K562 (cell line): ENCODE measurements at regions of chrX and their contacts with region 1.

Region 1: GRCh38 chrX:37745354-37745753 is 34.5 kb upstream of the CYBB start:
- DNase-seq: peak; percentile 54 to 72 (median 68)
- ATAC-seq: peak; percentile 95
- H3K4me3 ChIP-seq: no peak overlapping the region
- H3K27ac ChIP-seq: no peak overlapping the region
- H3K4me1 ChIP-seq: no peaks in the 10 kb centered on the region
- H3K27me3 ChIP-seq: no peaks in the 10 kb centered on the region
- CTCF ChIP-seq: peak; percentile 76 to 80 (median 80)
- EP300 ChIP-seq: no peak
- POLR2A ChIP-seq: no peak
- RAD21 ChIP-seq: peak; percentile 85 to 89

Region 2: DNA sequence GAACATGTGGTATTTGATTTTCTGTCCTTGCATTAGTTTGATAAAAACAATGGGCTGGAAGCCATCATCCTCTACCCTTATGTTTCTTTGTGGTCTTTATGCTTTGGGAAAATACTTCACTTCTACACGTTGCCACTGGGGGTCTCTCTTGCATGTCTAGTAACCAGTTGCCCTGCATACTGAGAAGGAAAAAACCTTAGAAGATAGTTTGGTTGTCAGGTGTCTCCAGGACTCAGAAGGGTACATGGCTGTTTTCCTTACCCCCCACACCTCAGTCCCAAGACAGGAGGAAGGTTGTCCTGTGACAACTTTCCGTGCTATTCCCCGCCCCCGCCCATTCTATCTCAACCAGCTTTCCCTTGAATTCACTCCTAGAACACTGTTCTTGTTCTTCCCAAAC is 236.0 kb before region 1 on chrX:
- CTCF ChIA-PET with region 1: no interaction called
- POLR2A ChIA-PET with region 1: no interaction called
- in situ Hi-C with region 1: no loop called
- intact Hi-C with region 1: loop called (anchors 10 kb)
- DNase-seq: peak in 1 of 4 experiments; percentile 8
- ATAC-seq: peak; percentile 77
- H3K4me3 ChIP-seq: no peak overlapping the region
- H3K27ac ChIP-seq: no peak overlapping the region
- H3K4me1 ChIP-seq: peaks cover 0 to 3% of the 10 kb centered on the region in 2 experiments; a peak in 1 of 5 replicates
- H3K27me3 ChIP-seq: no peaks in the 10 kb centered on the region
- CTCF ChIP-seq: peak; percentile 15 to 42 (median 40); a peak in 3 of 6 replicates
- EP300 ChIP-seq: no peak
- POLR2A ChIP-seq: no peak
- RAD21 ChIP-seq: peak; percentile 33 to 60

Region 3: GRCh38 chrX:37603938-37604409 is 141.4 kb before region 1 on chrX:
- CTCF ChIA-PET with region 1: no interaction called
- POLR2A ChIA-PET with region 1: no interaction called
- in situ Hi-C with region 1: no loop called
- intact Hi-C with region 1: no loop called
- DNase-seq: no peak
- ATAC-seq: no peak
- H3K4me3 ChIP-seq: no peak overlapping the region
- H3K27ac ChIP-seq: no peak overlapping the region
- H3K4me1 ChIP-seq: peaks cover 0 to 5% of the 10 kb centered on the region in 2 experiments; a peak in 1 of 5 replicates
- H3K27me3 ChIP-seq: no peaks in the 10 kb centered on the region
- CTCF ChIP-seq: no peak
- EP300 ChIP-seq: no peak
- POLR2A ChIP-seq: no peak
- RAD21 ChIP-seq: no peak

Region 4: GRCh38 chrX:37627602-37628001 is 117.8 kb before region 1 on chrX:
- CTCF ChIA-PET with region 1: no interaction called
- POLR2A ChIA-PET with region 1: no interaction called
- in situ Hi-C with region 1: no loop called
- intact Hi-C with region 1: no loop called
- DNase-seq: no peak
- ATAC-seq: no peak
- H3K4me3 ChIP-seq: no peak overlapping the region
- H3K27ac ChIP-seq: no peak overlapping the region
- H3K4me1 ChIP-seq: no peaks in the 10 kb centered on the region
- H3K27me3 ChIP-seq: no peaks in the 10 kb centered on the region
- CTCF ChIP-seq: no peak
- EP300 ChIP-seq: no peak
- POLR2A ChIP-seq: no peak
- RAD21 ChIP-seq: no peak

Region 5: DNA sequence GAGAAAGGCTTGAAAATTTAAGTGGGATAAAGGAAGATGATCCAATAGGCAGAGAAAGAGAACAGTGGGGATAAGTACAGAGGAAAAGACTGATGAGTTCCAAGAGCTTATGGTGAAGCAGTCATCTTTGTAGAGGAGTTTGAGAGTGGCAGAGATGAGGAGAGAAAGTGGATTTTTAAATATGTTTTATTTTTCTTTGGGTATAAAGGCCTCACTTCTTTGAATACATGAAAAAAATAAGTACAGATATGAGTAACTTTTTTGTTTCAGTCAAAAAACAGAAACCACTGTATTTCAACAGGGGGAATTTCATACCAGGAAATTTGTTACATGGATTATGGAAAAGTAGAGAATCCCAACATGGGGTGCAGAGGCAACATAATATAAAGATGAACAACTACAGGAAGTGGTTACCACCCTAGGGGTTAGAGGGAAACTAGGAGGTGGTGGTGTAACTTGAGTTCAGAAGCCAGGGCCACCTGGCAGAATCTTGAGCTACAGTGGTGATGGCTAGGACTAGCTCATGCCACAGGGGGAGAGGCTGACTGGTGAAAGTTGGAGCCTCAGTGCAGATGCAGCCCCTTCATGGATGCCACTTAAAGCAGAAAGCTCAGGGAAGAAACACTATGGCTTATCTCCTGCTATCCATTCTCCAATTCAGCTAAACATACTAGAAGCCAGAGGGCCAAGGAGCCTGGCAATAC is 31.1 kb after region 1 on chrX:
- CTCF ChIA-PET with region 1: no interaction called
- POLR2A ChIA-PET with region 1: no interaction called
- in situ Hi-C with region 1: no loop called
- intact Hi-C with region 1: no loop called
- DNase-seq: no peak
- ATAC-seq: no peak
- H3K4me3 ChIP-seq: no peak overlapping the region
- H3K27ac ChIP-seq: no peak overlapping the region
- H3K4me1 ChIP-seq: peaks cover 0 to 1% of the 10 kb centered on the region in 2 experiments; a peak in 2 of 5 replicates
- H3K27me3 ChIP-seq: no peaks in the 10 kb centered on the region
- CTCF ChIP-seq: no peak
- EP300 ChIP-seq: no peak
- POLR2A ChIP-seq: no peak
- RAD21 ChIP-seq: no peak